Psoas muscle (tissue), 8 donors: ENCODE measurements at regions of chr20 and their contacts with region 1.

Region 1: GRCh38 chr20:17938871-17939619 is 29.5 kb downstream of the SNX5 start:
- DNase-seq: peak; percentile 60 to 80
- ATAC-seq: peak; percentile 77 to 88 (median 84)
- H3K4me3 ChIP-seq: no peak overlapping the region
- H3K27ac ChIP-seq: peak overlapping the region; percentile 38
- H3K4me1 ChIP-seq: peaks cover 27% of the 10 kb centered on the region
- H3K27me3 ChIP-seq: no peaks in the 10 kb centered on the region
- CTCF ChIP-seq: peak; percentile 90

Region 2: DNA sequence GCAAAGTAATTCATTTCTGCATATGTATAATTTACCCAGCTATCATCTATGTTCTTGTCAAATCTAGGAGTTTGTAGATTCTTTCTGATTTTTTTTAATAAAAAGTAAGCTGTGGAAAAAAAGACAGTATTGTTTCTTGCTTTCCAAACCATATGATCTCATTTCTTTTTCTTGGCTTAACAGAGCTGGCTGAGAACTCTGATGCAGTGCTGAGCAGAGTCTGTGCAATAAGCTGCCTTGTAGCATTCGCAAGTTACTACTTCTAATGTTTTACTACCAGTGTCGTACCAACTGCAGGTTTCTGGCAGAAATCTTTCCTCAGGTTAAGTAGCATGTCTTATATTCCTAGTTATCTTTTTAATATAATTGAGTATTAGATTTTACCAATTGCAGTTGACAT is 272.6 kb before region 1 on chr20:
- intact Hi-C with region 1: loop called in 1 of 2 experiments (anchors 5 kb)
- DNase-seq: no peak
- ATAC-seq: peak in 1 of 4 donors; percentile 40
- H3K4me3 ChIP-seq: no peak overlapping the region
- H3K27ac ChIP-seq: no peak overlapping the region
- H3K4me1 ChIP-seq: peaks cover 6% of the 10 kb centered on the region
- H3K27me3 ChIP-seq: no peaks in the 10 kb centered on the region
- CTCF ChIP-seq: no peak

Region 3: DNA sequence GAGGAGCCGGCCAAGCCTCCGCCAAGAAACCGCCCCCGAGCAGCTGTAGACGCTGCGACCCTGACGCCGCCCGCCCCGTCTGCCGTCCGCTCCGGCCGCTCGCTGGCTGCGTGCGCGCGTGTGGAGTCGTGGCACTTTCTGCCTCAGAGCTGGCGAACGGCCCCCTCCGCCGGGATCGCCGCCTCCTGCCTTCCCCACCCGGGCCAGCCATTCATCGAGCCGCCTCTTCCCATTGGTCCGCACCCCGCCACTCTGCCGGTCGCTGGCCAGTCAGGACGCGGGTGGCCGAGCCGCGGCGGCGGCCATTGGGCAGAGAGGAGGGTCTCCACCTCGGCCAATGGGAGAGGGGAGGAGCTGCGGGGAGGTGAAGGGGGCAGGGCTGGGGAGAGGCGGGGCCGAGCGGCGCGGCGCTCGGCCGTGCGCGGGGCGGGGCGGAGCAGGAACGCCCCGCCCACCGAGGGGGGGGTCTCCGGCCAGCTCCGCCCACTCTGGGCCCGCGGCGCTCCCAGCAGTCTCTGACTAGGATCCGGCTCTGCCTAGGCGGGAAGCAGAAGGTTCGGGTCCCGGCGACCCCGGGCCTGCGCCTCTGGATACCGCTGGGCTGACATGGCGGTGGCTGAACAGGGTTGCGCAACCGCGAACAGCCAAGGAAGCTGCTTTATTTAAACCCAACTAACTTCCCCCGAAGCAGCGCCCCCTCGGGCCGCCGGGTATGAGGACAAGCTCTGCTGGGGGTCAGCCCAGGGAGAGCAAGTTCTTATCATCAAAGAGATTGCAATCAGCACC is 256.7 kb before region 1 on chr20 and contains the start of gene RRBP1:
- intact Hi-C with region 1: loop called in 1 of 2 experiments (anchors 2 kb)
- DNase-seq: peak; percentile 99
- ATAC-seq: peak; percentile 95 to 96 (median 96)
- H3K4me3 ChIP-seq: peak within 1 kb of the TSS; percentile 75
- H3K27ac ChIP-seq: peak within 1 kb of the TSS; percentile 81
- H3K4me1 ChIP-seq: peaks cover 11% of the 10 kb centered on the region
- H3K27me3 ChIP-seq: no peaks in the 10 kb centered on the region
- CTCF ChIP-seq: peak; percentile 62
- total RNA-seq, gene RRBP1: 21.1 to 40.8 (median 22.6) TPM

Region 4: DNA sequence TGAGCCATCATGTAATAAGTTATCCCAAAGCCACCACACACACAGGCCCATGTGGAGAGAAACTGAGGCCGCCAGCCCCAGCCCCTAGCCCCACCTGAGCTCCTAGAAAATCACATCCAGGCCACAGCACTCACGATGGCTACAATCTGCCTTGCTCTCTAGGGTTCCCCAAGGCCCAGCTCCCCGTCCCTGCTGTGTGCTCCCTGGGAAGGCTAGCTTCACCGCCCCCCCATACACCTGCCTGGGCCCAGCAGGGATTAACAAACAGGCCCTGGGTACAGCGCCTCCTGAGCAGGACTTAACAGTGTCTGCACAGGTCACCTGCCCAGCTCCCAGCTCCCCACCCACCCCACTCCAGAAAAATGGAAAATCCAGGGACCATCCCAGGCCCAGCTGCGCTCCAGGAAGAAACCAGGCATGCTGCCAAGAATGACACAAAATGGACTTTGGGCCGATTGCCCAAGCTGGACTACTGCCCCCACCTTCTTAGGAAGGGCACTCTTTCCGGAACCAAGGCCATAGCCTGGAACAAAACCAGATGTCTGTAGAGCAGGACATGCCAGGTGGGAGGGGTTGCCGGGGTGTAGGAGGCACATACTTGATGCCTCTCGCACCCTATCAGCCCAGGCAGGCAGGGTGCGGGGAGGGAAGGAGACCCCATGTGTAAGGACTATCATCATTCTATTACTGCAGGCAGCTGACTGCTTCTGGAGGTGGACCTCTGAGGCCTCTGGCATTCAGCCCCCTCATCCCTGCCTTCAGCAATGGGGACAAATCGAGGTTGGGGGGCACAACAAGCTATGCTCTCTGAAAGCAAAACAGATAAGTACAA is 75.4 kb before region 1 on chr20:
- intact Hi-C with region 1: no loop called
- DNase-seq: no peak
- ATAC-seq: no peak
- H3K4me3 ChIP-seq: no peak overlapping the region
- H3K27ac ChIP-seq: no peak overlapping the region
- H3K4me1 ChIP-seq: peaks cover 11% of the 10 kb centered on the region
- H3K27me3 ChIP-seq: peaks cover 0 to under 1% (median 0%) of the 10 kb centered on the region in 3 donors
- CTCF ChIP-seq: no peak